SK-N-SH (cell line): ENCODE measurements at regions of chr1 and their contacts with region 1.

Region 1: GRCh38 chr1:65687428-65688214 is 105.1 kb upstream of the PDE4B start:
- DNase-seq: peak; percentile 70
- H3K4me3 ChIP-seq: no peak overlapping the region; a peak in 2 of 4 replicates
- H3K27ac ChIP-seq: no peak overlapping the region
- H3K4me1 ChIP-seq: peaks cover 0 to 6% of the 10 kb centered on the region in 2 experiments; a peak in 1 of 4 replicates
- H3K27me3 ChIP-seq: no peaks in the 10 kb centered on the region
- CTCF ChIP-seq: peak; percentile 89
- EP300 ChIP-seq: peak in 1 of 2 experiments; percentile 63; a peak in 2 of 4 replicates
- RAD21 ChIP-seq: peak; percentile 100

Region 2: GRCh38 chr1:65230731-65231481 is 456.7 kb before region 1 on chr1:
- CTCF ChIA-PET with region 1: interaction called, 30 read pairs
- POLR2A ChIA-PET with region 1: no interaction called
- DNase-seq: no peak
- H3K4me3 ChIP-seq: no peak overlapping the region
- H3K27ac ChIP-seq: no peak overlapping the region
- H3K4me1 ChIP-seq: peaks cover 0 to 8% of the 10 kb centered on the region in 2 experiments; a peak in 3 of 4 replicates
- H3K27me3 ChIP-seq: no peaks in the 10 kb centered on the region
- CTCF ChIP-seq: no peak
- EP300 ChIP-seq: no peak
- RAD21 ChIP-seq: no peak

Region 3: GRCh38 chr1:65254319-65255034 is 433.1 kb before region 1 on chr1:
- CTCF ChIA-PET with region 1: interaction called, 18 read pairs
- POLR2A ChIA-PET with region 1: no interaction called
- DNase-seq: peak; percentile 97
- H3K4me3 ChIP-seq: peak overlapping the region; percentile 81 to 82
- H3K27ac ChIP-seq: peak overlapping the region in 1 of 2 experiments; percentile 86; a peak in 2 of 4 replicates
- H3K4me1 ChIP-seq: peaks cover 0 to 4% of the 10 kb centered on the region in 2 experiments; a peak in 1 of 4 replicates
- H3K27me3 ChIP-seq: no peaks in the 10 kb centered on the region
- CTCF ChIP-seq: peak; percentile 15; the same call in 1 of the 2 replicates
- EP300 ChIP-seq: no peak
- RAD21 ChIP-seq: no peak

Region 4: DNA sequence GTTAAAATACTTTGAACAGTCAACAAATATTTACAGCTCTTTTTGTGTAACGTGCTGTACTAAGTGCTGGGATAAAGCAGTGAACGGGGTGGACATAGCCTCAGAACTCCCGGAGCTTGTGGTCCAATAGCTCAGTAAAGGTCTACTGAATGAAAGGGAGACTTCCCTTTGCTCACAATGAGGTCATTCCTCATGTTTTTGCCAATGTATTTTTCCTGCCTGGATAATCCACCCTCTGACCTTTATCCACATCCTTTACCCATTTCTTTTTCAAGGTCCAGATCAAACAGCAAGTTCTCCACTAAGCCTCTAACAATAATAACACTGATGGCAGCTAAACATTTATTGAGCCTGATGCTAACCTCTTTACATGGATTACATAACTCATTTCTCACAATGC is 211.3 kb before region 1 on chr1:
- CTCF ChIA-PET with region 1: interaction called, 12 read pairs
- POLR2A ChIA-PET with region 1: no interaction called
- DNase-seq: no peak
- H3K4me3 ChIP-seq: no peak overlapping the region
- H3K27ac ChIP-seq: no peak overlapping the region
- H3K4me1 ChIP-seq: no peaks in the 10 kb centered on the region
- H3K27me3 ChIP-seq: no peaks in the 10 kb centered on the region
- CTCF ChIP-seq: no peak
- EP300 ChIP-seq: no peak
- RAD21 ChIP-seq: no peak

Region 5: GRCh38 chr1:65698590-65698989 is 11.0 kb after region 1 on chr1:
- CTCF ChIA-PET with region 1: interaction called, 37 read pairs
- POLR2A ChIA-PET with region 1: interaction called, 3 read pairs
- DNase-seq: no peak
- H3K4me3 ChIP-seq: no peak overlapping the region
- H3K27ac ChIP-seq: no peak overlapping the region
- H3K4me1 ChIP-seq: no peaks in the 10 kb centered on the region
- H3K27me3 ChIP-seq: no peaks in the 10 kb centered on the region
- CTCF ChIP-seq: no peak
- EP300 ChIP-seq: no peak
- RAD21 ChIP-seq: no peak